Activated CD4-positive, alpha-beta T cell treated with anti-CD3 and anti-CD28 coated beads for 36 hours (primary cell): ENCODE measurements at regions of chr11 and their contacts with region 1.

Region 1: GRCh38 chr11:111378861-111379601 is at the start of gene POU2AF1:
- DNase-seq: peak; percentile 91
- ATAC-seq: peak; percentile 77
- H3K4me3 Mint-ChIP-seq: peak within 1 kb of the TSS; percentile 69
- H3K27ac Mint-ChIP-seq: peak within 1 kb of the TSS; percentile 74
- H3K4me1 Mint-ChIP-seq: peaks cover 61% of the 10 kb centered on the region
- H3K27me3 Mint-ChIP-seq: no peaks in the 10 kb centered on the region
- total RNA-seq, gene POU2AF1: 9.6 to 10.0 TPM

Region 2: GRCh38 chr11:110818032-110818687 is 560.9 kb before region 1 on chr11:
- CTCF ChIA-PET with region 1: no interaction called
- POLR2A ChIA-PET with region 1: no interaction called
- intact Hi-C with region 1: loop called in 1 of 2 experiments (anchors 5 kb)
- DNase-seq: peak; percentile 66
- ATAC-seq: peak; percentile 95
- H3K4me3 Mint-ChIP-seq: no peak overlapping the region
- H3K27ac Mint-ChIP-seq: peak overlapping the region; percentile 83
- H3K4me1 Mint-ChIP-seq: peaks cover 20% of the 10 kb centered on the region
- H3K27me3 Mint-ChIP-seq: peaks cover 10% of the 10 kb centered on the region

Region 3: GRCh38 chr11:111336582-111337256 is 42.3 kb before region 1 on chr11:
- CTCF ChIA-PET with region 1: no interaction called
- POLR2A ChIA-PET with region 1: no interaction called
- intact Hi-C with region 1: no loop called
- DNase-seq: no peak
- ATAC-seq: no peak
- H3K4me3 Mint-ChIP-seq: no peak overlapping the region
- H3K27ac Mint-ChIP-seq: no peak overlapping the region
- H3K4me1 Mint-ChIP-seq: no peaks in the 10 kb centered on the region
- H3K27me3 Mint-ChIP-seq: no peaks in the 10 kb centered on the region

Region 4: DNA sequence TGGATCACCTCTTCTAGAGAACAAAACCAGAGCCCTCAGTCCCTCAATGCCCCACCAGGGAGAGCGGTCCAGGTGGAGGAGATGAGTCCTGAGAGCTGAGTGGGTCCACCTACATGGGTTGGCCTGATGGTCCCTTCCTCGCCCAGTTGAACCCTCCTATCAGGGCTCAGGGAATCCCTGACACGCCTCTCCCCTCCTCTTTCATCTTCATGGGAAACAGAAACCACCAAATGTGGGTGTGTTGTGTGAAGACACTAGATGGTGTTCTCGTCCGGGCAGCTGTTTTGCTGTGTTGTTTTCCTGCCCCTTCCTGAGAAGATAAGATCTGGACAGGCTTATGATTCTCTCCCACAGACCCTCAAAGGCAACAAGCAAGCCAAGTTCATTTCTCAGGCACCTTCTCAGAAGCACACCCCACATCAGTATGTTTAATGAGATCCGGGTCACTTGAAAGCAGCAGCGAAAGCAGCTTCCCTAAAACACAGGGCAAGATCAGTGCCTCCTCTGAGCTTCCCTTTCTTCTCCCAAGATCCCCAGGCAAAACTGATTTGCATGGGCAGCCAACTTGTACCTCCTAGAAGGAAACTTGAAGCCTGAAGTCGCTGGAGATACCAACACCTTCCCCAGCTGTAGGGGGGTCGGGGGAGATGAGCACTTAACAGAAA is 35.4 kb after region 1 on chr11:
- CTCF ChIA-PET with region 1: interaction called, 3 read pairs
- POLR2A ChIA-PET with region 1: no interaction called
- intact Hi-C with region 1: loop called (anchors 1 kb)
- DNase-seq: peak; percentile 40
- ATAC-seq: peak; percentile 25
- H3K4me3 Mint-ChIP-seq: peak overlapping the region; percentile 43
- H3K27ac Mint-ChIP-seq: peak overlapping the region; percentile 87
- H3K4me1 Mint-ChIP-seq: peaks cover 56% of the 10 kb centered on the region
- H3K27me3 Mint-ChIP-seq: no peaks in the 10 kb centered on the region

Region 5: GRCh38 chr11:111531687-111532364 is 152.8 kb after region 1 on chr11:
- CTCF ChIA-PET with region 1: no interaction called
- POLR2A ChIA-PET with region 1: no interaction called
- intact Hi-C with region 1: loop called (anchors 2 to 5 kb)
- DNase-seq: peak; percentile 88
- ATAC-seq: peak; percentile 96
- H3K4me3 Mint-ChIP-seq: no peak overlapping the region
- H3K27ac Mint-ChIP-seq: peak overlapping the region; percentile 59
- H3K4me1 Mint-ChIP-seq: peaks cover 43% of the 10 kb centered on the region
- H3K27me3 Mint-ChIP-seq: peaks cover 9% of the 10 kb centered on the region

Region 6: GRCh38 chr11:111938687-111939160 is 559.7 kb after region 1 on chr11:
- CTCF ChIA-PET with region 1: no interaction called
- POLR2A ChIA-PET with region 1: no interaction called
- intact Hi-C with region 1: loop called in 1 of 2 experiments (anchors 5 kb)
- DNase-seq: peak; percentile 66
- ATAC-seq: peak; percentile 89
- H3K4me3 Mint-ChIP-seq: peak overlapping the region; percentile 73
- H3K27ac Mint-ChIP-seq: peak overlapping the region; percentile 93
- H3K4me1 Mint-ChIP-seq: peaks cover 51% of the 10 kb centered on the region
- H3K27me3 Mint-ChIP-seq: no peaks in the 10 kb centered on the region